HCT116 (cell line): ENCODE measurements at regions of chr2 and their contacts with region 1.

Region 1: GRCh38 chr2:132547074-132547687 is 122.8 kb downstream of the LYPD1 start:
- DNase-seq: peak; percentile 36
- ATAC-seq: peak; percentile 68
- H3K4me3 ChIP-seq: no peak overlapping the region
- H3K27ac ChIP-seq: no peak overlapping the region
- H3K4me1 ChIP-seq: no peaks in the 10 kb centered on the region
- H3K27me3 ChIP-seq: no peaks in the 10 kb centered on the region
- CTCF ChIP-seq: peak; percentile 39 to 73 (median 57); a peak in 5 of 6 replicates
- POLR2A ChIP-seq: no peak
- RAD21 ChIP-seq: peak; percentile 70

Region 2: GRCh38 chr2:132479155-132479554 is 68.0 kb before region 1 on chr2:
- CTCF ChIA-PET with region 1: no interaction called
- POLR2A ChIA-PET with region 1: no interaction called
- RAD21 ChIA-PET with region 1: no interaction called
- intact Hi-C with region 1: no loop called
- DNase-seq: no peak
- ATAC-seq: no peak
- H3K4me3 ChIP-seq: no peak overlapping the region
- H3K27ac ChIP-seq: no peak overlapping the region
- H3K4me1 ChIP-seq: no peaks in the 10 kb centered on the region
- H3K27me3 ChIP-seq: no peaks in the 10 kb centered on the region
- CTCF ChIP-seq: no peak
- POLR2A ChIP-seq: no peak
- RAD21 ChIP-seq: no peak

Region 3: GRCh38 chr2:133484106-133484505 is 936.9 kb after region 1 on chr2:
- CTCF ChIA-PET with region 1: no interaction called
- POLR2A ChIA-PET with region 1: no interaction called
- RAD21 ChIA-PET with region 1: no interaction called
- intact Hi-C with region 1: no loop called
- DNase-seq: no peak
- ATAC-seq: no peak
- H3K4me3 ChIP-seq: no peak overlapping the region
- H3K27ac ChIP-seq: no peak overlapping the region
- H3K4me1 ChIP-seq: no peaks in the 10 kb centered on the region
- H3K27me3 ChIP-seq: no peaks in the 10 kb centered on the region
- CTCF ChIP-seq: no peak
- POLR2A ChIP-seq: no peak
- RAD21 ChIP-seq: no peak

Region 4: GRCh38 chr2:133561045-133561852 is 1014.1 kb after region 1 on chr2:
- CTCF ChIA-PET with region 1: no interaction called
- POLR2A ChIA-PET with region 1: no interaction called
- RAD21 ChIA-PET with region 1: no interaction called
- intact Hi-C with region 1: loop called (anchors 2 kb)
- DNase-seq: peak; percentile 27
- ATAC-seq: peak; percentile 49; the same call in 1 of the 2 replicates
- H3K4me3 ChIP-seq: no peak overlapping the region
- H3K27ac ChIP-seq: no peak overlapping the region
- H3K4me1 ChIP-seq: no peaks in the 10 kb centered on the region
- H3K27me3 ChIP-seq: peaks cover 6% of the 10 kb centered on the region; the same call in 1 of the 2 replicates
- CTCF ChIP-seq: peak; percentile 26 to 68 (median 49); a peak in 5 of 6 replicates
- POLR2A ChIP-seq: no peak
- RAD21 ChIP-seq: peak; percentile 64

Region 5: GRCh38 chr2:133780099-133780839 is 1233.1 kb after region 1 on chr2:
- CTCF ChIA-PET with region 1: interaction called, 10 read pairs
- POLR2A ChIA-PET with region 1: no interaction called
- RAD21 ChIA-PET with region 1: no interaction called
- intact Hi-C with region 1: no loop called
- DNase-seq: peak; percentile 52
- ATAC-seq: peak; percentile 83
- H3K4me3 ChIP-seq: no peak overlapping the region
- H3K27ac ChIP-seq: no peak overlapping the region
- H3K4me1 ChIP-seq: peaks cover 2 to 7% of the 10 kb centered on the region in 2 experiments; a peak in 3 of 4 replicates
- H3K27me3 ChIP-seq: no peaks in the 10 kb centered on the region
- CTCF ChIP-seq: peak; percentile 36 to 83 (median 74); a peak in 5 of 6 replicates
- POLR2A ChIP-seq: no peak
- RAD21 ChIP-seq: peak; percentile 71